Activated naive CD4-positive, alpha-beta T cell treated with anti-CD3 and anti-CD28 coated beads for 36 hours (primary cell): ENCODE measurements at regions of chr7 and their contacts with region 1.

Region 1: DNA sequence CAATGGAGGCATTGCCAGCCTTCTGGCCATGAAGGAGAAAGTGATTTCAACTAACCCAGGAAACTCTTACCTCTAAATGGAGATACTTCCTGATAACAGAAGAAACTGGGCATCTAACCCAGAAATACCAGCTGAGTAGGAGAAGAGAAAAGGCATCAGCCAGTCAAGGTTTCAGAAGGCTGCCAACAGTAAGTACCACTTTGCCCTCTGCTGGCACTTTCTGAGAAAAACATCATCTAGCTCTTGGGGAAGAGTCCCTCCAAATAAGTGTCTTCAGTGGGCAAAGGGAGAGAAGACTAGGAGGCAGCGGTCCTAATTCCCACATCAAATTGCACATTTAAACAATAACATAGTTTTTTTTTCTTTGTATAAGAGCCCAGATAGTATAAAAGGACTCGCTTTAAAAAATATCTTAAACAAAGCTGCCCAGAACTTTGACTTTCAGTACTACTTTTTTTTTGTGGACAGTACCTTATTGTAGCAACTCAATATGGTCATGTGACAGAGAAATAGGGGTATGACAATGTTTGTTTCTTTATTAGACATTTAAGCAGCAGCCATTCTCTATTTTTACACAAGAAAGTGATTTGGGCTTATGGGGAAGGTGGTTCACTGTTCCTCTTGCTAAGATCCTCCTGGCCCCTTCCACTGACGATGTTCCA is 157.3 kb downstream of the CTTNBP2 start:
- DNase-seq: peak; percentile 25
- H3K4me3 Mint-ChIP-seq: no peak overlapping the region
- H3K27ac Mint-ChIP-seq: no peak overlapping the region
- H3K4me1 Mint-ChIP-seq: no peaks in the 10 kb centered on the region
- H3K27me3 Mint-ChIP-seq: no peaks in the 10 kb centered on the region

Region 2: GRCh38 chr7:116647290-116647689 is 1068.6 kb before region 1 on chr7:
- CTCF ChIA-PET with region 1: no interaction called
- intact Hi-C with region 1: no loop called
- DNase-seq: no peak
- H3K4me3 Mint-ChIP-seq: no peak overlapping the region
- H3K27ac Mint-ChIP-seq: no peak overlapping the region
- H3K4me1 Mint-ChIP-seq: no peaks in the 10 kb centered on the region
- H3K27me3 Mint-ChIP-seq: peaks cover 23% of the 10 kb centered on the region

Region 3: GRCh38 chr7:117212969-117213877 is 502.7 kb before region 1 on chr7:
- CTCF ChIA-PET with region 1: no interaction called
- intact Hi-C with region 1: loop called (anchors 1 kb)
- DNase-seq: peak; percentile 66
- H3K4me3 Mint-ChIP-seq: no peak overlapping the region
- H3K27ac Mint-ChIP-seq: no peak overlapping the region
- H3K4me1 Mint-ChIP-seq: no peaks in the 10 kb centered on the region
- H3K27me3 Mint-ChIP-seq: no peaks in the 10 kb centered on the region

Region 4: GRCh38 chr7:117399820-117400422 is 316.0 kb before region 1 on chr7:
- CTCF ChIA-PET with region 1: no interaction called
- intact Hi-C with region 1: loop called (anchors 1 kb)
- DNase-seq: no peak
- H3K4me3 Mint-ChIP-seq: no peak overlapping the region
- H3K27ac Mint-ChIP-seq: no peak overlapping the region
- H3K4me1 Mint-ChIP-seq: no peaks in the 10 kb centered on the region
- H3K27me3 Mint-ChIP-seq: no peaks in the 10 kb centered on the region

Region 5: GRCh38 chr7:117458977-117459583 is 256.8 kb before region 1 on chr7:
- CTCF ChIA-PET with region 1: no interaction called
- intact Hi-C with region 1: loop called (anchors 1 kb)
- DNase-seq: no peak
- H3K4me3 Mint-ChIP-seq: no peak overlapping the region
- H3K27ac Mint-ChIP-seq: no peak overlapping the region
- H3K4me1 Mint-ChIP-seq: no peaks in the 10 kb centered on the region
- H3K27me3 Mint-ChIP-seq: no peaks in the 10 kb centered on the region

Region 6: GRCh38 chr7:117505245-117505644 is 210.7 kb before region 1 on chr7:
- CTCF ChIA-PET with region 1: no interaction called
- intact Hi-C with region 1: no loop called
- DNase-seq: no peak
- H3K4me3 Mint-ChIP-seq: no peak overlapping the region
- H3K27ac Mint-ChIP-seq: no peak overlapping the region
- H3K4me1 Mint-ChIP-seq: no peaks in the 10 kb centered on the region
- H3K27me3 Mint-ChIP-seq: no peaks in the 10 kb centered on the region